Aorta (tissue), 5 donors: ENCODE measurements at regions of chr2 and their contacts with region 1.

Region 1: DNA sequence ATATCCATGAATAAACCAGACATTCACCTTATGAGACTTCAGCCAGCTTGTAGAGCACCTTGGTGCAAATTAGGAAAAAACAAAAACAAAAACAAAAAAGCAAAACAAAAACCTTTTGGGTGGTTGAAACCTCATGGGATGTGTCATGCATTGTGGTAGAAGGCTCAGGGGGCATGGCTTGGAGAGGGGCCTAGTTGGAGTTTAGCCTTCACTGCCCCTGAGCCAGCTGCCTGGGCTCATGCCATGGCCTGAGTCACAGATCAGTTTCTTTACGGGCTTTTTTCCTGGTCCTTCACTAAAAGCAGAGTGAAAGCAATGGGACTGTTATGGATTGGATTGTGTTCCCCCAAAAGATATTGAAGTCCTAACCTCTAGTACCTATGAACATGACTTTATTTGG is 22.0 kb upstream of the DAPL1 start:
- DNase-seq: peak; percentile 80 to 89
- ATAC-seq: peak; percentile 75
- H3K4me3 ChIP-seq: no peak overlapping the region
- H3K27ac ChIP-seq: no peak overlapping the region
- H3K4me1 ChIP-seq: peaks cover 5 to 12% of the 10 kb centered on the region in 2 donors
- H3K27me3 ChIP-seq: no peaks in the 10 kb centered on the region

Region 2: DNA sequence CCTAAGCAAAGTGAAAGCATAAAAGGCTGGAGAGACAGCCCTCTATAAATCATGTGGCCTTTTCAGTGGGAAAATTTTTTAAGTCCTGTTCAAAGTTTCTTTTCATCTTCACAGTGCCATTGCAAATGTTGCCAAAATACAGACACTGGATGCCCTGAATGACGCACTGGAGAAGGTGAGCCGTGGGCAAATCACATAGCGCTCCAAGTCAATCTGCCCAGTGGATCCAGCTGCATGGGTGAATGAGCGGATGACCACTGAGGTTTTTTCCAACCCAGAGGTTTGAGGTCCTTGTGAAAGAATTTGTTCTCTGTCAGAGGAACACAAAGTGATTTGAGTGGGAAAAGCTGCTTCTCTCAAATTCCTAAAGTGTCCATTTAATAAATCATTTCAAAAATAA is 33.8 kb after region 1 on chr2:
- intact Hi-C with region 1: no loop called
- DNase-seq: no peak
- ATAC-seq: no peak
- H3K4me3 ChIP-seq: no peak overlapping the region
- H3K27ac ChIP-seq: no peak overlapping the region
- H3K4me1 ChIP-seq: no peaks in the 10 kb centered on the region
- H3K27me3 ChIP-seq: no peaks in the 10 kb centered on the region

Region 3: DNA sequence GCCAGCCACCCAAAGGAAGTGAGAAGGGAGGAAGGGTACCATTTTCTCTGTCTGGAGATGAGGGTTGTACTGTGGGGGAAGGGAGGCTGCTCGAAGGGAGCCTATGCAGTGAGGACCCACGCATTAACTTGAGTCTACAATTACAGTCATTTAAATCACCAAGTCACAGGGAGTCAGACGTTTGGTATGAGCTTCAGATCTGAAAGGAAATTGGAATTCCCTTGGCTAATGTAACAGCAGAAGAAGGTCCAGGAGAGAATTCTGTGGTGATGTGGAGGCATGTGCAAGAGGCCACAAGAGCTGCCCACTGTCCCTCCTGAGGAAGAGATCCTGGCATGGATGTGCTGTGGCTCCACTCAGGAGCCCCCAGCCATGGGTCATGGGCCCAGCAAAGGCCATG is 44.5 kb after region 1 on chr2:
- intact Hi-C with region 1: loop called in 1 of 2 experiments (anchors 5 kb)
- DNase-seq: no peak
- ATAC-seq: peak; percentile 12
- H3K4me3 ChIP-seq: no peak overlapping the region
- H3K27ac ChIP-seq: no peak overlapping the region
- H3K4me1 ChIP-seq: peaks cover 0 to 7% of the 10 kb centered on the region in 2 donors
- H3K27me3 ChIP-seq: no peaks in the 10 kb centered on the region

Region 4: DNA sequence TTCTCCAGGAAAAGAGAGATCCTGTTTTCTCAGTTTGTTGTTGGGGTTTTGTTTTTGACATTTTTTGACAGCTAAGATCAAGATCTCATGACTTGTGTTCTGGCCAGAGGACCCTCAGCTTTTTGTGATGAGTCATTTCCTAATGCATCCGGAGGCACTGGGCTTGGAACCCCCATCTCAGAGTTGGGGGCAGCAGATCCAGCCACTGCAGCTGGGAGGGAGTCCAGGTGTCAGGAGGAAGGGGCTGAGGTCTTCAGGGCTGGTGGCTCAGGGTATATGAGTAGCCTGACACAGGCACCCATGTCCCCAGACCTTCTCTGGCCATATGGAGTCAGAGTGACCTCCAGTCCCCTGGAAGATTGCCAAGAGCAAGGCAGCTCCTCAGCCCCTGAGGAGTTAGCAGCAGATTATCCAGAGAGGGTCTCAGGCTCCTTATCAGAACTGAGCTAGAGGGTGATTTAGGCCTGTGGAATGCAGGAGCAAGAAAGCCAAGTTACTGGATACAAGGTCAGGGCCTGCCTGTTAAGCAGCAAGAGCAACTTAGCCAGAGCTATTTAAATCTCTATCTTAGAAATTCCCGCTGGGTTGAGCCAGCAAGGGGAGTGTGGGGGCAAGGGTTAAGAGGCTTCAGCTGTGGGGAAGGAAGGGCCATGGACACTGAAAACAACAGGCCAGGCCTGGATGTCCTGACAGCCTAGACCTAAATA is 257.7 kb after region 1 on chr2:
- intact Hi-C with region 1: loop called in 1 of 2 experiments (anchors 5 kb)
- DNase-seq: peak in 1 of 2 donors; percentile 58
- ATAC-seq: peak; percentile 86
- H3K4me3 ChIP-seq: no peak overlapping the region
- H3K27ac ChIP-seq: peak overlapping the region; percentile 64 to 81
- H3K4me1 ChIP-seq: peaks cover 7 to 20% of the 10 kb centered on the region in 2 donors
- H3K27me3 ChIP-seq: no peaks in the 10 kb centered on the region